Body of pancreas (tissue), 4 donors: ENCODE measurements at regions of chr17 and their contacts with region 1.

Region 1: GRCh38 chr17:81959362-81960129 is 1.4 kb downstream of the NOTUM start:
- DNase-seq: peak; percentile 63 to 78 (median 74)
- ATAC-seq: peak; percentile 88
- H3K4me3 ChIP-seq: no peak overlapping the region
- H3K27ac ChIP-seq: no peak overlapping the region
- H3K4me1 ChIP-seq: peaks cover 24% of the 10 kb centered on the region
- H3K27me3 ChIP-seq: peaks cover 6 to 22% of the 10 kb centered on the region in 2 donors
- CTCF ChIP-seq: peak in 6 of 7 experiments; percentile 8 to 99 (median 90)
- POLR2A ChIP-seq: no peak

Region 2: DNA sequence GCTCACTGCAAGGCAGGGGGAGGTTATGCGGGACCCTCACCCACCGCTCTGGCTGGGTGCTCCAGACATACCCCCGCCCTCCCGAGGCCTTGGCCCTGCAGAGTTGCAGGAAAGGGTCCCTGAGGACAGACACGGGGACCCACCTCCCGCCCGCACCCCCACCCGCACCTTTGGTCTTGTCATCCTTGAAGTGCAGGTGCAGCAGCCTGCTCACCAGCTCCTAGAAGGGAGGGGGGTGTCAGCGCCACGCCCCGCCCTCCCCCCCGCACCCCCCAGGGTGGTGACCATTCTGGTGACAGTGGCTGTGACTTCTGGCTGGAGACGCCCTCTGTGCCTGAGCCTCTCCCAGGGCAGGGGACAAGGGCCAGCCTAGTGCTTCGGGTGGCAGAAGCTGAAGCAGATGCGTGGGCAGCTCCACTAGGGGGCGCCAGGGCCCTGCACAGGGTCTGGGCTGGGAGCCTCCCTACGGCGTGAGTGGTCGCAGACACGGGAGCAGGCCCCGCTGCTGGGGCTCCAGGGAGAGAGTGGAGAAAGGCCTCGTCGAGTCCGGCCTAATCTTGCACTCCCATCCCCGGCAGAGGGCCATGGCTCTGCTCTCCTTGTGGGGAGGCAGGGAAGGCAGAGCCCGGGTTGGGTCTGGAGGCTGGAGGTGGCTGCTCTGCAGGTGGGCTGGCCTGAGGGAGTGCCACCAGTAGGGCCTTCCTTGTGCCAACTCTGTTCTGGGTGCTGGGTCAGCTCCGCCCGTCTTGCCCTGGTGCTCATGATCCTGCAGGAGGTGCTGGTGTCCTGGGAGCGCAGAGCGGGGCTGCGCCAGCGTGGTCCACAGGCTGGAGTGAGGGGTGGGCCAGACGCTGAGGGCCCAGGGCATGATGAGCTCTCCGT is 60.4 kb after region 1 on chr17:
- intact Hi-C with region 1: loop called (anchors 2 kb)
- DNase-seq: peak in 3 of 4 donors; percentile 56 to 64 (median 58)
- ATAC-seq: no peak
- H3K4me3 ChIP-seq: no peak overlapping the region
- H3K27ac ChIP-seq: no peak overlapping the region
- H3K4me1 ChIP-seq: peaks cover 59% of the 10 kb centered on the region
- H3K27me3 ChIP-seq: no peaks in the 10 kb centered on the region
- CTCF ChIP-seq: peak; percentile 32 to 50 (median 47)
- POLR2A ChIP-seq: no peak

Region 3: DNA sequence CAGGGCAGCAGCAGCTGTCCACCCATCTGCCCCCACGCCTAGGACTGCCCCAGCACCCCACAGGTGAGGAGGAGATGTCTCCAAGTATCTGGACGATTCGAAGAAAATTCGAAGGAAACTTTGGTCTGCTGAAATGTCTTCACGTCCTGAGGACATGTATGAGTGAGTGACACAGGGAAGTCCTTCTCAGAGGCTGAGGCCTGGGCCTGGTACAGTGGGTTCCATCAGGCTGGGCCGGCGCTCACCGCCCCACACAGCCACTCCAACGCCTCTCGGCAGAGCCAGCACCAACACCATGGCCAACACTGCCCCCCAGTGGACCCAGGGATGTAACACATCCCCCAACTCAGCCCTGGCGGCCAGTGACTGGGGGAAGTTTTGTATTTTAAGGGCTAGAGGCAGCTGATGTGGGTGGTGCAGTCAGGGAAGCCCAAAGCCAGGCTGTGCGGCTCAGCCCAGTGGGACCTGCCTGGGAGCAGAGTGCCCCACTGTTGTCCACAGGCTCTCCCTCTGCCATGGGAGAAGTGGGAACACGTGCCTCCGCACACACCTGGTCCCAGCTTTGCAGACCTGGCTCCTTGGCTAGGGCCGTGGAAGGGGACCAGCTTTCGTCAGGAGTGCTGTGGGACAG is 194.3 kb after region 1 on chr17:
- intact Hi-C with region 1: loop called (anchors 10 kb)
- DNase-seq: peak; percentile 77 to 84 (median 78)
- ATAC-seq: peak; percentile 87
- H3K4me3 ChIP-seq: no peak overlapping the region
- H3K27ac ChIP-seq: no peak overlapping the region
- H3K4me1 ChIP-seq: peaks cover 10% of the 10 kb centered on the region
- H3K27me3 ChIP-seq: no peaks in the 10 kb centered on the region
- CTCF ChIP-seq: peak; percentile 66 to 95 (median 91)
- POLR2A ChIP-seq: no peak